Dorsolateral prefrontal cortex (tissue), 120 donors: ENCODE measurements at regions of chr9 and their contacts with region 1.

Region 1: GRCh38 chr9:94668418-94668932 is 29.2 kb upstream of the FBP1 start:
- DNase-seq: no peak
- H3K4me3 ChIP-seq: peak overlapping the region in 2 of 59 donors; percentile 2 to 22
- H3K27ac ChIP-seq: no peak overlapping the region
- H3K27me3 ChIP-seq: peaks cover 0 to 5% (median 0%) of the 10 kb centered on the region in 45 donors
- CTCF ChIP-seq: no peak

Region 2: DNA sequence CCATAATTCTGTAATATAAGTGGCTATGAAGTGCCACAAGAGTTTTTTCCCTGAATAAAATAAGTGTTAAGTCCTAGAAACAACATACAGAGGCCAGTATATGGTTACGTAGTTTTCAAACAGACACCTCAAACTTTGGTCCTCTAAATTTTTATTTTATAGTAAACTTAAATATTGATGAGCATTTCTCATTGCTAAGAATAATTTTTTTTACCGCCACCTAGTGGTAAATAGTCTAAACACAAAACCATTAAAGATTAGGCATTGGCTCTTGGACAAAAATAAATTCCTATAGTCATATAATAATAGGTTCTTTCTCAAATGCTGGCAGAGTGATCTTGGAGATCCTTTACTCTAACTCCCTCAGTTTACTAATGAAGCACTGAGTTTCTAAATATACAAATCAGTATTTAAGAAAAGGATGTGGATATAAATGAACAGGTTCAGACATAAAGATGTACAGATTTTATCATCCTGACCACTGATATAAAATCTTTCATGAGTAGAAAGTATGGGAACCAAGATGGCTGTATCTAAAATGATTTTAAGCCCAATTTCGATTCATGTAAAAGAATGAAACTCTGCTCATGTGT is 512.8 kb after region 1 on chr9:
- intact Hi-C with region 1: loop called in 1 of 2 experiments (anchors 5 kb)
- DNase-seq: no peak
- H3K4me3 ChIP-seq: no peak overlapping the region
- H3K27ac ChIP-seq: no peak overlapping the region
- H3K27me3 ChIP-seq: no peaks in the 10 kb centered on the region
- CTCF ChIP-seq: peak in 55 of 56 donors; percentile 37 to 72 (median 56)

Region 3: DNA sequence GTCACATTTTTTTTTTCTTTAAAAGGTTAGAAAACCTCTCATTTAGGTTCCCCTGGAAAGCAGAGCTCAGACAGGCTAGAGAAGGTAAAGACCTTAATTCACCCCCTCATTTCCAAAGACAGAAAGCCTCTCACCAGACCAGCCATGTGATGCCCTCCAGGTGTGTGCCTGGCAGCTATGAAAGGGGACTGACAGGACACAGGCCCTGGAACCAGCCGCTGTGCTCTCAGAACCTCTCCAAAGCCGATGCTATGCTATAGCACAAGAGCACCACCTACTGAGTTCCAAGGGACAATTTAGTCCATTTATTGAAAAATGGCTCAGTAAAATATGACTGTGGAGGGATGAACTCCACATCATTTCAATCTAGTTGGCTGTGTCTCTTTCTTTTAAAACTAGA is 600.2 kb after region 1 on chr9:
- intact Hi-C with region 1: loop called in 1 of 2 experiments (anchors 5 kb)
- DNase-seq: peak in 1 of 10 donors; percentile 17
- H3K4me3 ChIP-seq: no peak overlapping the region
- H3K27ac ChIP-seq: no peak overlapping the region
- H3K27me3 ChIP-seq: no peaks in the 10 kb centered on the region
- CTCF ChIP-seq: peak in 52 of 56 donors; percentile 14 to 66 (median 44)

Region 4: DNA sequence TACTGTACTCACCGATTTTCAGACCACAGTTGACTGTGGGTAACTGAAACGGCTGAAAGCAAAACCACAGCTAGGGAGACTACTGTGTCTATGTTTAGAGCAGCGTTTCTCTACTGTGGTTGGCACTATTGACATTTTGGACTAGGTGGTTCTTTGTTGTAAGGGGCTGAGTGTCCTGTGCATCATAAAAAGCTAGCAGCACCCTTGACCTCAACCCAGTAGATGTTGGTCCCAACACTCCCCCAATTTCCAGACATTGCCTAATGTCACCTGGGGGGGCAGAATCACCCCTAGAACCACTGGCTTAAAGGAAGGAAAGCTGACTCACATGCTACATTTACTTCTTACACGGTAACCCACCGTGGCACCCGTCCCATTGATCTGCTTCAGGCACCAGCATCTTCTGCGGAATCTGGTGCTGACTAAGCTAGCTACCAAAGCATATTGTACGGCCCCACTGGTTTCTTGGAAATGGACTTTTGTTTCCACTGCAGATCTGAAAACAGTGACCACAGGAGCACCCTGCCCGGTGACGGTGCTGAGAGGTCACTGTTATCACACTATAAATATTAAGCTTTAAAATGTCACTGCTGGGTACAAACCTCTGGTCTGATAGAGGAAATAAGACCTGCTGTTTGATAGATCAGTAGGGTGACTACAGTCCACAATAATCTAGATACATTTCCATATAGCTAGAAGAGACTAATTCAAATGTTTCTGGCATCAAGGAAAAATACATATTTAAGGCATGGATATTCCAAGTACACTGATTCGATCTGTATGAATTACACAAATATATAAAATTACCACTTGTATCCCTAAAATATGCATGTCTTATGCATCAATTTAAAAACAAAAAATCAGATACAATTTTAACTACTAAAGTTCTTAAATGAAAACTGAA is 1482.1 kb after region 1 on chr9:
- intact Hi-C with region 1: no loop called
- DNase-seq: no peak
- H3K4me3 ChIP-seq: no peak overlapping the region
- H3K27ac ChIP-seq: peak overlapping the region in 7 of 59 donors; percentile 40 to 77 (median 72)
- H3K27me3 ChIP-seq: no peaks in the 10 kb centered on the region
- CTCF ChIP-seq: no peak